ENCODE measurements at regions of chr2 and their contacts with region 1.

Region 1: DNA sequence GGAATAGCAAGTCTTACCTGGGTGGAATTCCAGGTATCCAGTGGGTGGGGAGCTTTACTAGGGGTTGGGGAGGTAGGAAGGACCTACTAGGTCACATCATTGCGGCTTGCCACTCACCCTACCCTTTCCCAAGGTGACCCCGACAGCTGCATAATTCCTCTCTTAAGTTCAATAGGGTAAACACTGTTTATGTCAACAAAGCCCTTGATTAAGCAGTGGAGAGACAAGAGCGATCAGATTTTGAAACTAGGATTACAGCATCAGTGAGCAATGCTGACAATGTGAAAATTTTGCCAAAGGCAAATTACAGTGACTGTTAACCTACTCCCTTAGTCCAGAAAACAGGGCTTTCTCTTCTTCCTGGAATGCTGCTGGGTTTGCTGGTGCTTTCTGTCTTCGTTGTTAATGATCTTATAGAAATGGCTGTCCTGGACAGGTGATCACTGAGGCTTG is 14.5 kb downstream of the SLC19A3 start:
- DNase-seq: peak; percentile 84 to 89
- H3K4me3 ChIP-seq: no peak overlapping the region
- H3K4me3 Mint-ChIP-seq: peak overlapping the region; percentile 60
- H3K27ac Mint-ChIP-seq: peak overlapping the region; percentile 96
- H3K4me1 ChIP-seq: peaks cover 51% of the 10 kb centered on the region
- H3K4me1 Mint-ChIP-seq: peaks cover 34% of the 10 kb centered on the region
- H3K27me3 ChIP-seq: no peaks in the 10 kb centered on the region
- H3K27me3 Mint-ChIP-seq: no peaks in the 10 kb centered on the region
- CTCF ChIP-seq: no peak

Region 2: DNA sequence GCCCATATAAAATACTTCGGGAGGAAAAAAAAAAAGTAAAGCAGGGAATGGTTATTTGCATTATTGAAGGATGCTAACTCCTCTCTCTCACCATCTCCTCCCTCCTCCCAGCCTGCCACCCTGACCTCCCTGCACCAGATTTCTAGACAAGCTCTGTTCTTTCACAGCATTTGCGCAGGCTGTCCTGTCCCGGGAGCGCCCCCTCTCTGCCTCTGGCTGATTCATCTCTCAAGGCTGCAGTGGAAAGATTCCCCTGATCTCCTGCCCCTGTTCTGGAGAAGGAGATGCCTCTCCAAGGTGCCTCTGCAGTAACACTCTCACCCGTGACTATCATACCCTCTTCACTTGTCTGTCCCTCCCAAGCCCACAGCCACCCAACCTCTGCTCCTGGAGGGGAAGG is 577.8 kb before region 1 on chr2:
- CTCF ChIA-PET with region 1: no interaction called
- POLR2A ChIA-PET with region 1: no interaction called
- intact Hi-C with region 1: loop called (anchors 5 kb)
- DNase-seq: peak; percentile 25 to 41
- H3K4me3 ChIP-seq: no peak overlapping the region
- H3K4me3 Mint-ChIP-seq: no peak overlapping the region
- H3K27ac Mint-ChIP-seq: peak overlapping the region; percentile 62
- H3K4me1 ChIP-seq: peaks cover 15% of the 10 kb centered on the region
- H3K4me1 Mint-ChIP-seq: peaks cover 29% of the 10 kb centered on the region
- H3K27me3 ChIP-seq: no peaks in the 10 kb centered on the region
- H3K27me3 Mint-ChIP-seq: no peaks in the 10 kb centered on the region
- CTCF ChIP-seq: peak in 1 of 2 experiments; percentile 8

Region 3: GRCh38 chr2:227503433-227504406 is 199.6 kb before region 1 on chr2:
- CTCF ChIA-PET with region 1: no interaction called
- POLR2A ChIA-PET with region 1: no interaction called
- intact Hi-C with region 1: no loop called
- DNase-seq: no peak
- H3K4me3 ChIP-seq: no peak overlapping the region
- H3K4me3 Mint-ChIP-seq: no peak overlapping the region
- H3K27ac Mint-ChIP-seq: no peak overlapping the region
- H3K4me1 ChIP-seq: peaks cover 15% of the 10 kb centered on the region; the same call in 1 of the 2 replicates
- H3K4me1 Mint-ChIP-seq: peaks cover 10% of the 10 kb centered on the region
- H3K27me3 ChIP-seq: no peaks in the 10 kb centered on the region
- H3K27me3 Mint-ChIP-seq: no peaks in the 10 kb centered on the region
- CTCF ChIP-seq: no peak

Region 4: DNA sequence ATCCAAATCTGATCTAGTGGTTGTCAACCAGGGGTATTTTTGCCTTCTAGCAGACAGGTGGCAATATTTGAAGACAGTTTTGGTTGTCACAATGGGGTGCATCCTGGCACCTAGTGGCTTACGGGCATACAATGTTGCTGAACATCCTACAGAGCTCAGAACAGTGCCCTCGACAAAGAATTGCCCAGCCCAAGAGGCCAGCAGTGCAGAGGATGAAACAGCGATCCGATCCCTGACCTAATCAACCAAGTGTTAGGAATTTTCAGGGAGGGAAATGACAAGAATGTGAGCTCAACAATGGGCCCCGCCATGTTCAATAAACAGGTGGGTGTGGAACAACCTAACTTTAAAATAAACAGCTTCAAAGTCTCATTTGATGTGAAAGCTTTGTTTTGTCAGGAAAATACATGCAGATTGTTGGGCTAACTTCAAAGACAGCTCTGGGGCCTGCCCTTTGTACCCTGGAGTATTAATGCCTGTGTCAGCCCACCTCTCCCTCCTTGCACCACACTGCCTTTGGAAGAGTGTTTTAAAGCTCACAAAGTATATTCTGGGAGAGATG is 59.2 kb before region 1 on chr2:
- CTCF ChIA-PET with region 1: no interaction called
- POLR2A ChIA-PET with region 1: no interaction called
- intact Hi-C with region 1: loop called (anchors 1 kb)
- DNase-seq: peak; percentile 76 to 78
- H3K4me3 ChIP-seq: no peak overlapping the region
- H3K4me3 Mint-ChIP-seq: no peak overlapping the region
- H3K27ac Mint-ChIP-seq: peak overlapping the region; percentile 73
- H3K4me1 ChIP-seq: peaks cover 39% of the 10 kb centered on the region
- H3K4me1 Mint-ChIP-seq: peaks cover 17% of the 10 kb centered on the region
- H3K27me3 ChIP-seq: no peaks in the 10 kb centered on the region
- H3K27me3 Mint-ChIP-seq: no peaks in the 10 kb centered on the region
- CTCF ChIP-seq: no peak

Region 5: GRCh38 chr2:227655454-227655853 is 47.9 kb before region 1 on chr2:
- CTCF ChIA-PET with region 1: interaction called, 3 read pairs
- POLR2A ChIA-PET with region 1: no interaction called
- intact Hi-C with region 1: loop called (anchors 5 kb)
- DNase-seq: no peak
- H3K4me3 ChIP-seq: no peak overlapping the region
- H3K4me3 Mint-ChIP-seq: no peak overlapping the region
- H3K27ac Mint-ChIP-seq: peak overlapping the region; percentile 37
- H3K4me1 ChIP-seq: peaks cover 11% of the 10 kb centered on the region
- H3K4me1 Mint-ChIP-seq: peaks cover 12% of the 10 kb centered on the region
- H3K27me3 ChIP-seq: no peaks in the 10 kb centered on the region
- H3K27me3 Mint-ChIP-seq: no peaks in the 10 kb centered on the region
- CTCF ChIP-seq: no peak

Region 6: GRCh38 chr2:227717687-227718567 is 14.6 kb after region 1 on chr2 and contains the start of gene SLC19A3:
- CTCF ChIA-PET with region 1: interaction called, 4 read pairs
- POLR2A ChIA-PET with region 1: interaction called, 3 read pairs
- intact Hi-C with region 1: loop called (anchors 1 kb)
- DNase-seq: peak; percentile 87 to 90
- H3K4me3 ChIP-seq: peak within 1 kb of the TSS; percentile 43
- H3K4me3 Mint-ChIP-seq: peak within 1 kb of the TSS; percentile 74
- H3K27ac Mint-ChIP-seq: peak within 1 kb of the TSS; percentile 59
- H3K4me1 ChIP-seq: peaks cover 34% of the 10 kb centered on the region
- H3K4me1 Mint-ChIP-seq: peaks cover 20% of the 10 kb centered on the region
- H3K27me3 ChIP-seq: no peaks in the 10 kb centered on the region
- H3K27me3 Mint-ChIP-seq: no peaks in the 10 kb centered on the region
- CTCF ChIP-seq: no peak
- total RNA-seq, gene SLC19A3: 88.2 and 98.5 TPM in 2 replicates